CD8-positive, alpha-beta T cell (primary cell): ENCODE measurements at regions of chr3 and their contacts with region 1.

Region 1: DNA sequence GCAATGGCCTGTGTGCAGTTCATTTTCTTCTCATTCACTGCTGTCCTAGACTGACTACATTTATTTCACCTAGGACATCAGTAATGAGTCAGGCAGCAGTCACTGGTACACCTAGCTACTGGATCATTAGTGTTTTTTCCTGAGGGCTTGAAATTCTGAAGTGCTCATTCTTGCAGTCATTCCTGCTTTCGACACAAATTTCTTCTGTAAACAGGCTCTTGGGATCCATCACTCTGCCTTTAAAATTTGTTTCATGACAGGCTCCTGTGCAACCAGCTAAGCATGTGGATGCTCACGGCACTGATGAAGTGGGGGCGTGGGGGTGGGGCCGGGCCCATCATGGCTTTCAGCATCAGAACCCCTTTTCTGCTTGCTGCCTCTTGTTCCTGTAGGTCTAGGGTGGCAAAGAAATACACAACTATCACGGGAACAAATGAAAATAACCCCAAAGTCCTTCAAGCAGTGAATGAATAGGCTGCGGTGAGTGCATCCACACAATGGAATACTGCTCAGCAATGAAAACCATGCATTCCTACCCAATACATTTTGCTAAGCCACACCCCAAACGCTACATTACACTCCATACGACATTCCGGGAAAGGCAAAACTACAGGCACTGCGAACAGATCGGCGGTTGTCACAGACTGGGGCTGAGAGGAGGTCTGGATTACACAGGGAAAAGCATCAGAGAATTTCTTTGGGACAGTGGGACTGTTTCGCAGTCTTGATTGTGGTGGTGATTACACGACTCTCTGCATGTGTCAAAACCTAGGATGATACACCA is 9.3 kb upstream of the MELTF start:
- DNase-seq: no peak
- ATAC-seq: no peak
- H3K4me3 ChIP-seq: no peak overlapping the region
- H3K4me3 Mint-ChIP-seq: no peak overlapping the region
- H3K27ac ChIP-seq: no peak overlapping the region
- H3K27ac Mint-ChIP-seq: no peak overlapping the region
- H3K4me1 ChIP-seq: no peaks in the 10 kb centered on the region
- H3K4me1 Mint-ChIP-seq: no peaks in the 10 kb centered on the region
- H3K27me3 ChIP-seq: no peaks in the 10 kb centered on the region
- H3K27me3 Mint-ChIP-seq: no peaks in the 10 kb centered on the region
- CTCF ChIP-seq: no peak

Region 2: GRCh38 chr3:196620161-196620604 is 418.7 kb before region 1 on chr3:
- CTCF ChIA-PET with region 1: no interaction called
- POLR2A ChIA-PET with region 1: no interaction called
- intact Hi-C with region 1: loop called in 1 of 2 experiments (anchors 5 kb)
- DNase-seq: peak in 2 of 9 experiments; percentile 46 to 60
- ATAC-seq: peak; percentile 64
- H3K4me3 ChIP-seq: no peak overlapping the region
- H3K4me3 Mint-ChIP-seq: no peak overlapping the region
- H3K27ac ChIP-seq: no peak overlapping the region
- H3K27ac Mint-ChIP-seq: peak overlapping the region; percentile 1
- H3K4me1 ChIP-seq: peaks cover 7% of the 10 kb centered on the region
- H3K4me1 Mint-ChIP-seq: peaks cover 24% of the 10 kb centered on the region
- H3K27me3 ChIP-seq: no peaks in the 10 kb centered on the region
- H3K27me3 Mint-ChIP-seq: no peaks in the 10 kb centered on the region
- CTCF ChIP-seq: no peak